ENCODE measurements at regions of chr9 and their contacts with region 1.

Region 1: GRCh38 chr9:70418822-70419545 is 4.5 kb upstream of the KLF9 start:
- DNase-seq: peak; percentile 85 to 97
- H3K4me3 ChIP-seq: peak overlapping the region; percentile 82
- H3K27ac ChIP-seq: peak overlapping the region; percentile 97
- H3K4me1 ChIP-seq: peaks cover 23% of the 10 kb centered on the region
- H3K27me3 ChIP-seq: no peaks in the 10 kb centered on the region
- CTCF ChIP-seq: no peak

Region 2: DNA sequence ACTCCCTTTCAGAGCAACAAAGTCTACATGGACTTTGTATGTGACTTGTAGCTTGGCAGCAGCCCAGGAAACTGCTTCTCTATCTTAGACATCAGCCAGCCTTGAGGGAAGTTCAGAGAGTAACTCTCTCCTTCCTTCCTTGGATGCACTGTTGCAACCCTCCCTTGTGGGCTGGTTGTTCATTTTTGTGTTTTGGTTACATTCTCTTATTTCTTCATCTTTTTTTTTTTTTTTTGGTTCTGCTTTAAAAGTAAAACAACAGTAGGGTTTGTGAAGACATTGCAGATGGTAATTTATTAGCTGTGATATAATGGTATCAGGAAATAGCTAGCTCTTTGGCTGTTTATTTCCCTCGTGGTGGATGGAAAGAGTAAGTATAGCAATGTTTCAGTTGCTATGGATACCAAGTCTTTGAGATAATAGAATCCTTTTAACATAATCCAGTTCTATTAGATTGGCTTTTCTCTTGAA is 473.3 kb before region 1 on chr9:
- CTCF ChIA-PET with region 1: no interaction called
- POLR2A ChIA-PET with region 1: interaction called, 3 read pairs
- intact Hi-C with region 1: loop called (anchors 5 kb)
- DNase-seq: no peak
- H3K4me3 ChIP-seq: no peak overlapping the region
- H3K27ac ChIP-seq: peak overlapping the region; percentile 95
- H3K4me1 ChIP-seq: peaks cover 18% of the 10 kb centered on the region
- H3K27me3 ChIP-seq: no peaks in the 10 kb centered on the region
- CTCF ChIP-seq: no peak

Region 3: DNA sequence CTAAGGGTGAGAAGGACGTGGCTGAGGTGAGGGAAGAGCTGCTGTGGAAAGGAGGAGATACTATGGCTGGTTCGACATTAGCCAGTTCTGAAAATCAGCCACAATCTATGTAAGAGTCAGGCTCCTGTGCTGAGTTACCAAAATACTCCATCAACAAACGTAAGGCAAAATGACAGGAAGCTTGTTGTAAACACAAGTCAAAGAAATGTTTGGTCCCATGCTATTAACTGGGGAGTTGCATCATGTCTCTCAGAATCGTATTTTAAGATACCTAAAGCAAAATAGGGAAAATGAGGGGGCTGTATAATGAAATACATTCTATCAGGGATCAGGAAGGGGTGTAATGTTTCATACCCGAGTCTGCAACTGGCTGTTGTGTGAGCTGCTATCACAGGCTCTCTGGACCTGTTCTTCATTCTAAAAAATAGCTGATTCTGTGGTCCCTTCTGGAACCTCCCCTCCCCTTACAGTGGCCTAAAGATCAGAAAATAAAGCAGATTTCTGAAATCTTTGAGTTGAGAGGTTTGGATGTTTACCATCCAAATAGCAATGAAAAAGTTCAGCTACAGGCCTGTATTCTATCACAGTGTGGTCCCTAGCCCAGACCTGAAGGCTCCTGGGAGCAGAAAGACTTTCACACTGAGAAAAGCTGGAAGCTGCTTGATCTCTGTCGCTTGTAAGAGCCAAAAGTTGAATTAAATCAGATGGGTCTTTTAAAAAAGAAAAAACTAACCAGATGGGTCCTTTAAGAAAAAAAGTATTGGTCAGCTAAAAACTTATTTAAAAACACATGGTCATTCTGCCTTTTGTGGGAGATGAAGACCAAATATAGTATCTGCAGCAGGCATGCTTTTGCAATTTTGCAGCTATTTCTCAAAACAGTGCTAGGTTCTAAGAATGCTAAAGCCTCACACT is 258.0 kb before region 1 on chr9:
- CTCF ChIA-PET with region 1: no interaction called
- POLR2A ChIA-PET with region 1: no interaction called
- intact Hi-C with region 1: no loop called
- DNase-seq: no peak
- H3K4me3 ChIP-seq: no peak overlapping the region
- H3K27ac ChIP-seq: no peak overlapping the region
- H3K4me1 ChIP-seq: no peaks in the 10 kb centered on the region
- H3K27me3 ChIP-seq: no peaks in the 10 kb centered on the region
- CTCF ChIP-seq: no peak

Region 4: DNA sequence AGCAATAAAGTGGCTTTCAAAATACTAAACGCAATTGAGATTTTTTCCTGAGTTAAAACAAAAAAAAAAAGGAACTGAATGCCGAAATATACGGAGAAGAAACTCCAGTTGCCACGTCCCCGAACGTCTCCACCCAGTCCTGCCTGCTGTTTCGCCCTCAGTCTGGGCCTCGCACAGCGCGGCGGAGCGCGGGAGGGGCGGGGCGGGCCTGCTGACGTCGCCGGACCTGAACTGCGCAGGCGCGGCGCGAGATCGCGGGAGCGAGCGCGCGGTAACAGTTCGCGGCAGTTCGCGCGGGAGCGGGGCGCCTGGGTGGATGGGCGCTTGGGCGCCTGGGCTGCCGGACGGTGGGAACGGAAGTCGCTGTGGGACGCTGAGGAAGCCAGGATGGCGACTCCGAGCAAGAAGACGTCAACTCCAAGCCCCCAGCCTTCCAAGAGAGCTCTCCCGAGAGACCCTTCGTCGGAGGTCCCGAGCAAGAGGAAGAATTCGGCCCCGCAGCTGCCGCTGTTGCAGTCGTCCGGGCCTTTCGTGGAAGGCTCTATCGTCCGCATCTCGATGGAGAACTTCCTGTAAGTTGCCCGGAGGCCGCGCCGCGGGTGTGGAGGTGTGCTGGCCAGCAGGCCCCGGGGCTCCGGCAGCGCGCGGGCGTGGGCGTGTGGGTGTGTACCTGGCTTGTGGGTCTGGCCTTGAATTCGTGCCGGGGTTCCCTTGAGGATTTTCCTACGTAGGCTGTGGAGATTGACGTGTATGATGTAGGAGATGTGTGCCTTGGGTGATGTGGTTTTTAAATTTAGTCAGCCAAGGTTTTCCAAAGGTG is 160.1 kb before region 1 on chr9 and contains the start of gene SMC5:
- CTCF ChIA-PET with region 1: no interaction called
- POLR2A ChIA-PET with region 1: interaction called, 8 read pairs
- intact Hi-C with region 1: loop called (anchors 2 kb)
- DNase-seq: peak; percentile 72 to 95
- H3K4me3 ChIP-seq: peak within 1 kb of the TSS; percentile 75
- H3K27ac ChIP-seq: peak within 1 kb of the TSS; percentile 89
- H3K4me1 ChIP-seq: peaks cover 68% of the 10 kb centered on the region
- H3K27me3 ChIP-seq: no peaks in the 10 kb centered on the region
- CTCF ChIP-seq: no peak
- total RNA-seq, gene SMC5: 34.4 and 41.9 TPM in 2 replicates

Region 5: DNA sequence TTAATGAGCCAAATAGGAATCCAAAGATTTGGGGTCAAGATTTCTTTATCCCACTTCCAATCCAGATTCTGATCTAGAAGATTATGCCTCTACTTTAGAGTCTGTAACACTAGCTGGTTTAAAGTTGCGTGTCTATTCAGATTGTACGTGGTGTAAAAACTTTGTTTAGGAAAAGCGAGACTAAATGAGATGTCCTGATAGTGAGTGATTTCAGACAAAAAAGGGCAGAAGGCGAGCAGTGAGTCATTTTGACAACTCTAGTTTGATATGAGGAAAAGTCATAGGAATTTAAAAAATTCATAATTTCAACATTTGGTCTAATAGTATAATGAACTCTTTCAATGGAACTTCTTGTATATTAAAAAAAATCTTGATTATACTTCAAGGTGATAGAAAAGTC is 115.1 kb after region 1 on chr9:
- CTCF ChIA-PET with region 1: no interaction called
- POLR2A ChIA-PET with region 1: no interaction called
- intact Hi-C with region 1: loop called (anchors 1 kb)
- DNase-seq: peak in 1 of 2 experiments; percentile 71
- H3K4me3 ChIP-seq: 0 out of 2 replicates have a peak overlapping the region, but pooled peaks have one; percentile 12
- H3K27ac ChIP-seq: peak overlapping the region; percentile 52
- H3K4me1 ChIP-seq: peaks cover 15% of the 10 kb centered on the region; the same call in 1 of the 2 replicates
- H3K27me3 ChIP-seq: no peaks in the 10 kb centered on the region
- CTCF ChIP-seq: no peak

Region 6: DNA sequence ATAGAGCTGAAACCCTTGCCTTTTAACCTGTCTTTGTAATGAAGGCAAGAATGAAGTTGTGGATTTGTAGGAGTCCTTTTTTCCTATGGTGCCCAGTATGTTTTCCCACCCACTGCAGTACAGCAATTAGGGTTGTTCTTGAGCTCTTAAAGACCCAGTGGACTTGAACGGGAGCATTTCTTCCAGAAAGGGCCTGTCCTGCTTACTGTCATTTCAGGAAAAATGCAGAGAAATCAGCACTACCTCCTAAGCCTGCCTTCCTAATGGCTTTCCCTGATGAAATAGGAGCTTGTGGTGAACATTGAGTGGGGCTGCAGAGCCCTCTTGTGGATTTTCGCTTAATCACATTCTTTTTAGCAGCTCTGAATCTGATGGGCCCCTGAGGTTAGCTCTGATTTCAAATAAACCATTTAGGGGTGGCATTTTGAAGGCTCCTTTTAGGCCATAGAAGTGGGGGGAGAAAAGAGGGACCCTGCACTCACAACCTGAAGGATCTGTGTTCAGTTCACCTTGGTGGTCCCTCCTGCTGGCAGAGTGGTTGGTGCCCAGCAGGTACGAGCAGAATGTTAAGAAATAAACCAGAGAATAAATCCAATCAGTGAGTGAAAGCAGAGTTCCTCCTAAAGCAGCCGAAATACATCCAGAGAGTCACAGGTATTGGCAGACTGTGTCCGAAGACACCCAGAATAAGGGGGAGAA is 183.5 kb after region 1 on chr9:
- CTCF ChIA-PET with region 1: no interaction called
- POLR2A ChIA-PET with region 1: interaction called, 5 read pairs
- intact Hi-C with region 1: loop called (anchors 1 kb)
- DNase-seq: peak; percentile 56 to 57
- H3K4me3 ChIP-seq: no peak overlapping the region
- H3K27ac ChIP-seq: no peak overlapping the region
- H3K4me1 ChIP-seq: no peaks in the 10 kb centered on the region
- H3K27me3 ChIP-seq: no peaks in the 10 kb centered on the region
- CTCF ChIP-seq: peak; percentile 87

Measured in PC-9 (cell line).